ENCODE measurements at regions of chr2 and their contacts with region 1.

Region 1: GRCh38 chr2:150487537-150488429 is at the start of gene RND3:
- DNase-seq: peak; percentile 92 to 93
- ATAC-seq: peak; percentile 89 to 91
- H3K4me3 ChIP-seq: peak within 1 kb of the TSS; percentile 58 to 74 (median 68)
- H3K27ac ChIP-seq: peak within 1 kb of the TSS; percentile 74 to 82 (median 80)
- H3K4me1 ChIP-seq: peaks cover 12 to 14% of the 10 kb centered on the region in 2 donors
- H3K27me3 ChIP-seq: no peaks in the 10 kb centered on the region
- CTCF ChIP-seq: peak; percentile 47 to 82 (median 74)
- POLR2A ChIP-seq: peak; percentile 80 to 82
- total RNA-seq, gene RND3: 2.1 to 14.9 (median 12.3) TPM

Region 2: DNA sequence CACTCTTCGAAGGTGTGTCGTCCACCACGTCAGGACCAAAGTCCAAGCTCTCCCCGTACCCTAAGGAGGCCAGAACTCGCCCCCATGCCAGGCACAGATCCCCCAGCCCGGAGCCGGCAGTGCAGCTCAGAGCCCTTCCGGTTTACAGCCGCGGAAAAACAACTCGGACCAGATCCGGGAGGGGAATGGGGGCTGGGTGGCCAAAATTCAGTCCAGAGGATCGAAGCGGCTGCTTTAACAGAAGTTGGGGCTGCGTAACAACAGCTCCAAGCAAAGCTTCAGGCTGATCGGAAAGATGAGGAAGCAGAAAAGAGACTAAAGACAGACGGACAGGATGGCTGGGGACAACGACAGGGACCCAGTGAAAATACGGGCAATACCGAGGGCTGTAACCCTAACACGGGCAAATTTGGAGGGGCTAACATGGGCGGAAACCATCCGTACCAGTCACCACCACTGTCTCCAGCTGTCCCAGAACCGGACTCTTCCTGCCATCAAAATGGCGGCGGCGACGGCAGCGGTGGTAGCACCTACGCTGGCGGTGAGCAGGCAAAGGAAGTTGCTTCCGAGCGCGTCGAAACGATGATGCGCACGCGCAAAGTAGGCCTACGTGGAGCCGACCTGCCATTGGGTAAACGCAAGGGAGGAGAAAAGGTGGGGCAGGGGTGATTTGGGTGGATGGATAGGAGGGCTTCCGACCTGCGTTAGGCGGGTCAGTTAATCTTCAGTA is 900.4 kb before region 1 on chr2 and contains the start of gene MMADHC:
- in situ Hi-C with region 1: loop called in 1 of 4 experiments (anchors 10 kb)
- intact Hi-C with region 1: loop called (anchors 5 kb)
- DNase-seq: peak; percentile 93 to 96
- ATAC-seq: peak; percentile 96 to 98
- H3K4me3 ChIP-seq: peak within 1 kb of the TSS; percentile 75 to 93 (median 92)
- H3K27ac ChIP-seq: peak within 1 kb of the TSS; percentile 92 to 98 (median 97)
- H3K4me1 ChIP-seq: peaks cover 25 to 47% of the 10 kb centered on the region in 2 donors
- H3K27me3 ChIP-seq: no peaks in the 10 kb centered on the region
- CTCF ChIP-seq: no peak
- POLR2A ChIP-seq: peak; percentile 80 to 87
- total RNA-seq, gene MMADHC: 140 to 205 (median 169) TPM

Region 3: DNA sequence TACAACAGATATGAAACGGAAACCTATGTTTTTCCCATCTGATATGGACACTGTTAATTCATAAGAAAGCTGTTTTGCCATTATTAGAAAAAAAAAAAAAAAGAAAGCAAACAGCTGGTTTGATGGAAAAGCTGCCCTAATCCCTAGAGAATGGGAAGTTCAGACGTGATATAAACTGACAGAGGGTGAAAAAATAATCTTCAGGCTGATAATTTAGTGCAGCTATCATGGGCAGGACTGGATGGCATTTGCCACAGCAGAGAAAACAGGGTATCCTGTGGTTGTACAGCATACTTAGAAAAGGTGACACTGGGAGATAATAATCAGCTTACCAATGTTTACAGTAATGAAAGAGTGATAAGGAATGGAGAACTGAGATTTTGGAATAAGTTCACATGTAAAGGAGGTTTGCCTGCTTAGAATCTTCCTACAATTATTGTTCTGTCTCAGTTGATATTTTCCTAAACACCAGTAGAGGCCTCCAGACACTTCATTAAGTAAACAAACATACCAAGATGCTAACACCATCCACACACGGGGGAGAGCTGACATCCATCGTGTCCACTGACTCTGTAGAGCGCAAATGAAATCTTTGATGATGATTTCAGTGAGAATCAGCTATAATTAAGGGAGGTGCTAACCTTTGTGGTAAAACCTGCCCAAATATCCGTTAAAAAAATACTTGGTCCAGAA is 688.6 kb before region 1 on chr2:
- in situ Hi-C with region 1: loop called in 2 of 4 experiments (anchors 10 to 25 kb)
- intact Hi-C with region 1: loop called (anchors 1 kb)
- DNase-seq: no peak
- ATAC-seq: no peak
- H3K4me3 ChIP-seq: no peak overlapping the region
- H3K27ac ChIP-seq: no peak overlapping the region
- H3K4me1 ChIP-seq: no peaks in the 10 kb centered on the region
- H3K27me3 ChIP-seq: no peaks in the 10 kb centered on the region
- CTCF ChIP-seq: peak in 1 of 5 experiments; percentile 14
- POLR2A ChIP-seq: no peak

Region 4: GRCh38 chr2:149816756-149817551 is 670.8 kb before region 1 on chr2:
- in situ Hi-C with region 1: loop called in 1 of 4 experiments (anchors 25 kb)
- intact Hi-C with region 1: no loop called
- DNase-seq: no peak
- ATAC-seq: no peak
- H3K4me3 ChIP-seq: no peak overlapping the region
- H3K27ac ChIP-seq: no peak overlapping the region
- H3K4me1 ChIP-seq: no peaks in the 10 kb centered on the region
- H3K27me3 ChIP-seq: no peaks in the 10 kb centered on the region
- CTCF ChIP-seq: no peak
- POLR2A ChIP-seq: no peak

Region 5: GRCh38 chr2:151238527-151239487 is 751.0 kb after region 1 on chr2:
- in situ Hi-C with region 1: no loop called
- intact Hi-C with region 1: loop called (anchors 10 kb)
- DNase-seq: peak; percentile 14 to 43
- ATAC-seq: peak; percentile 73 to 89
- H3K4me3 ChIP-seq: no peak overlapping the region
- H3K27ac ChIP-seq: no peak overlapping the region
- H3K4me1 ChIP-seq: no peaks in the 10 kb centered on the region
- H3K27me3 ChIP-seq: no peaks in the 10 kb centered on the region
- CTCF ChIP-seq: peak; percentile 56 to 88 (median 79)
- POLR2A ChIP-seq: no peak